ENCODE measurements at regions of chr10 and their contacts with region 1.

Region 1: DNA sequence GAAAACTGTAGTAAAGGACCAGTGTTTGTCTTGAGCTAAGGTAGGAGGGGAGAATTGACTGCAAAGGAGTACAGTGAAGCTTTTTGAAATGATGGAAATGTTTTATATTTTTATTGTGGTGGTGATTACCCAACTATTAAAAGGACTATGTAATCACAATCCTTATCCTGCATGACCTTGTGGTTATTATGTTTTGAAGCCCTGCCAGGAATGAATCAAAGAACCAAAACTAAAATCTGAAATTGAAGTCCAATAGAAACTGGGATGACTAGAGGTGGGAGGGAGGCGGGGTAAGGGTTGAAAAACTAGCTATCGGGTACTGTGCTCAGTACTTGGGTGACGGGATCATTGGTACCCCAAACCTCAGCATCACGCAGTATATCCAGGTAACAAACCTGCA is 8.2 kb downstream of the CCDC7 start:
- DNase-seq: no peak
- H3K4me3 ChIP-seq: no peak overlapping the region
- H3K27ac ChIP-seq: no peak overlapping the region
- H3K4me1 ChIP-seq: no peaks in the 10 kb centered on the region
- H3K27me3 ChIP-seq: no peaks in the 10 kb centered on the region
- CTCF ChIP-seq: no peak
- POLR2A ChIP-seq: no peak

Region 2: GRCh38 chr10:32350811-32351350 is 103.3 kb before region 1 on chr10:
- intact Hi-C with region 1: loop called (anchors 5 kb)
- DNase-seq: no peak
- H3K4me3 ChIP-seq: no peak overlapping the region
- H3K27ac ChIP-seq: no peak overlapping the region
- H3K4me1 ChIP-seq: peaks cover 0 to 6% of the 10 kb centered on the region in 2 donors
- H3K27me3 ChIP-seq: no peaks in the 10 kb centered on the region
- CTCF ChIP-seq: no peak
- POLR2A ChIP-seq: no peak